ENCODE measurements at regions of chr10 and their contacts with region 1.

Region 1: GRCh38 chr10:95601116-95601719 is 40.0 kb upstream of the SORBS1 start:
- DNase-seq: peak in 8 of 9 donors; percentile 2 to 44 (median 28)
- ATAC-seq: peak; percentile 58
- H3K4me3 ChIP-seq: no peak overlapping the region
- H3K4me3 Mint-ChIP-seq: no peak overlapping the region
- H3K27ac ChIP-seq: no peak overlapping the region
- H3K27ac Mint-ChIP-seq: no peak overlapping the region
- H3K4me1 ChIP-seq: no peaks in the 10 kb centered on the region
- H3K4me1 Mint-ChIP-seq: peaks cover 0 to 4% (median 0%) of the 10 kb centered on the region in 7 donors
- H3K27me3 ChIP-seq: no peaks in the 10 kb centered on the region
- H3K27me3 Mint-ChIP-seq: peaks cover 0 to 8% (median 5%) of the 10 kb centered on the region in 5 donors

Region 2: GRCh38 chr10:95133016-95133752 is 468.0 kb before region 1 on chr10:
- CTCF ChIA-PET with region 1: no interaction called
- POLR2A ChIA-PET with region 1: no interaction called
- intact Hi-C with region 1: loop called in 1 of 2 experiments (anchors 5 kb)
- DNase-seq: peak in 8 of 9 donors; percentile 22 to 74 (median 48)
- ATAC-seq: peak; percentile 67
- H3K4me3 ChIP-seq: no peak overlapping the region
- H3K4me3 Mint-ChIP-seq: no peak overlapping the region
- H3K27ac ChIP-seq: no peak overlapping the region
- H3K27ac Mint-ChIP-seq: no peak overlapping the region
- H3K4me1 ChIP-seq: no peaks in the 10 kb centered on the region
- H3K4me1 Mint-ChIP-seq: no peaks in the 10 kb centered on the region
- H3K27me3 ChIP-seq: no peaks in the 10 kb centered on the region
- H3K27me3 Mint-ChIP-seq: peaks cover 0 to 9% (median 0%) of the 10 kb centered on the region in 5 donors

Region 3: DNA sequence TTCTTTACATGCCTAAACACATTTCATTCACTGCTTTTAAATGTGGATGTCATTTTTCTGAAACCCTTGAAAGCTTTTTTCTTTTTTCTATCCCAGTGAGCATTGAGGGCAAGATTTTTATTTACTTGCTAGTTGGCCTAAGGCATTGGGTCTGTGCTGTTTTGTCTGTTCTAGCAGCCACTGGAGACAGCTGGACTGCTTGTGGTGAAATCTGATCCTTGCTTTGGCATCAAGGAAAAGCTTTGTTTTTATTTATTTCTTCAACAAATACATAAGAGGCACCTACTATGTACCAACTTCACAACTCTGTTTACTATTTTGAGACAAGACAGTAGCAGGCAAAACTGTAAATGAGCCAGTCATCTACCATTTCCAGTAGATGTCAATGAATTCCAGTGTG is 282.0 kb before region 1 on chr10:
- CTCF ChIA-PET with region 1: no interaction called
- POLR2A ChIA-PET with region 1: no interaction called
- intact Hi-C with region 1: no loop called
- DNase-seq: no peak
- ATAC-seq: no peak
- H3K4me3 ChIP-seq: no peak overlapping the region
- H3K4me3 Mint-ChIP-seq: no peak overlapping the region
- H3K27ac ChIP-seq: no peak overlapping the region
- H3K27ac Mint-ChIP-seq: no peak overlapping the region
- H3K4me1 ChIP-seq: no peaks in the 10 kb centered on the region
- H3K4me1 Mint-ChIP-seq: no peaks in the 10 kb centered on the region
- H3K27me3 ChIP-seq: no peaks in the 10 kb centered on the region
- H3K27me3 Mint-ChIP-seq: peaks cover 0 to 28% (median 0%) of the 10 kb centered on the region in 5 donors

Region 4: DNA sequence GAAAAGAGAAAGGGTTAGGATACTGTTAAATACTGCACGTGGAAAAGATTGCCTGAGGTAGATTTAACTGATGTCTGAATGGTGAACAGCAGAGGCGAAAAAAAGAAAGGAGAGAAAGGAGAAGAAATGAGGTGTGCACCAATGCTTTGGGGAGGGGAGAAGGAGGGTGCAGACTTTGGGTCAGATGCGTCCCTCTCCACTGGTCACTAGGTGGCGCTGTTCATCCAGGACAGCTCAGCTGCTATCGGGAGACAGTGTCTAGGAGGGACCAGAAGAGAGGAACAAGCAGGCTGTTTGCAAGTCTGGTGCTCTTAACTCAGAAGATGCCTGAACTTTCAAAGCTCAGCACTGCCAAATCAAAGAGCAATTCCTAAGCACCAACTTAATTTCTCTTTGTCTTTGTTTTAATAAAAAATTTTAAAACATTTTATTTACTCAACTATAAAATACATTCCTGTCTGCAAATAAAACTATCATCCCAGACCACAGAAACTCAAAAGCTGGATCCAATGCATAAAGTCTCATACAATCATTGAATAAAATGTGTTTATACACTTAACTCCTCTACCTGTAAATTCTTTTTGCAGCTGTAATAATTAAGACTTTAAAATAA is 226.5 kb before region 1 on chr10:
- CTCF ChIA-PET with region 1: no interaction called
- POLR2A ChIA-PET with region 1: no interaction called
- intact Hi-C with region 1: loop called (anchors 1 kb)
- DNase-seq: peak in 4 of 9 donors; percentile 8 to 70 (median 15)
- ATAC-seq: peak; percentile 89
- H3K4me3 ChIP-seq: no peak overlapping the region
- H3K4me3 Mint-ChIP-seq: no peak overlapping the region
- H3K27ac ChIP-seq: no peak overlapping the region
- H3K27ac Mint-ChIP-seq: no peak overlapping the region
- H3K4me1 ChIP-seq: no peaks in the 10 kb centered on the region
- H3K4me1 Mint-ChIP-seq: peaks cover 0 to 6% (median 4%) of the 10 kb centered on the region in 7 donors
- H3K27me3 ChIP-seq: no peaks in the 10 kb centered on the region
- H3K27me3 Mint-ChIP-seq: peaks cover 8 to 56% (median 17%) of the 10 kb centered on the region in 5 donors

Region 5: GRCh38 chr10:95430231-95430951 is 170.8 kb before region 1 on chr10:
- CTCF ChIA-PET with region 1: interaction called, 31 read pairs
- POLR2A ChIA-PET with region 1: no interaction called
- intact Hi-C with region 1: loop called in 1 of 2 experiments (anchors 1 kb)
- DNase-seq: peak in 8 of 9 donors; percentile 14 to 52 (median 34)
- ATAC-seq: peak; percentile 89
- H3K4me3 ChIP-seq: no peak overlapping the region
- H3K4me3 Mint-ChIP-seq: no peak overlapping the region
- H3K27ac ChIP-seq: no peak overlapping the region
- H3K27ac Mint-ChIP-seq: no peak overlapping the region
- H3K4me1 ChIP-seq: no peaks in the 10 kb centered on the region
- H3K4me1 Mint-ChIP-seq: peaks cover 0 to 2% (median 0%) of the 10 kb centered on the region in 7 donors
- H3K27me3 ChIP-seq: no peaks in the 10 kb centered on the region
- H3K27me3 Mint-ChIP-seq: peaks cover 0 to 3% (median 0%) of the 10 kb centered on the region in 5 donors

Region 6: DNA sequence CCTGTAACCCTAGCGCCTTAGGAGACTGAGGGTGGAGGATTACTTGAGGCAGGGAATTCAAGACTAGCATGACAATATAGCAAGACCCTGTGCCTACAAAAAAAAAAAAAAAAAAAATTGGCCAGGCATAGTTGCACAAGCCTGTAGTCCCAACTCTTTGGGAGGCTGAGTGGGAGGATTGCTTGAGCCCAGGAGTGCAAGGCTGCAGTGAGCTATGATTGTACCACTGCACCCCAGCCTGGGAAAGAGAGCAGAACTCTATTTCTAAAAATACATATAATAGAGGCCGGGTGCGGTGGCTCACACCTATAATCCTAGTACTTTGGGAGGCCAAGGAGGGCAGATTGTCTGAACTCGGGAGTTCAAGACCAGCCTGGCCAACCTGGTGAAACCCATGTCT is 29.8 kb before region 1 on chr10:
- CTCF ChIA-PET with region 1: no interaction called
- POLR2A ChIA-PET with region 1: no interaction called
- intact Hi-C with region 1: no loop called
- DNase-seq: no peak
- ATAC-seq: no peak
- H3K4me3 ChIP-seq: no peak overlapping the region
- H3K4me3 Mint-ChIP-seq: no peak overlapping the region
- H3K27ac ChIP-seq: no peak overlapping the region
- H3K27ac Mint-ChIP-seq: no peak overlapping the region
- H3K4me1 ChIP-seq: no peaks in the 10 kb centered on the region
- H3K4me1 Mint-ChIP-seq: peaks cover 0 to 2% (median 0%) of the 10 kb centered on the region in 7 donors
- H3K27me3 ChIP-seq: no peaks in the 10 kb centered on the region
- H3K27me3 Mint-ChIP-seq: peaks cover 8 to 24% (median 15%) of the 10 kb centered on the region in 5 donors

Region 7: GRCh38 chr10:95656291-95657164 is 55.3 kb after region 1 on chr10 and contains the start of gene ALDH18A1:
- CTCF ChIA-PET with region 1: no interaction called
- POLR2A ChIA-PET with region 1: no interaction called
- intact Hi-C with region 1: no loop called
- DNase-seq: peak; percentile 78 to 95 (median 88)
- ATAC-seq: peak; percentile 95
- H3K4me3 ChIP-seq: peak within 1 kb of the TSS; percentile 78
- H3K4me3 Mint-ChIP-seq: peak within 1 kb of the TSS; percentile 98 to 100 (median 99)
- H3K27ac ChIP-seq: peak within 1 kb of the TSS; percentile 72
- H3K27ac Mint-ChIP-seq: peak within 1 kb of the TSS; percentile 82 to 97 (median 93)
- H3K4me1 ChIP-seq: peaks cover 7 to 13% of the 10 kb centered on the region in 2 donors
- H3K4me1 Mint-ChIP-seq: peaks cover 7 to 40% (median 27%) of the 10 kb centered on the region in 7 donors
- H3K27me3 ChIP-seq: no peaks in the 10 kb centered on the region
- H3K27me3 Mint-ChIP-seq: peaks cover 0 to 3% (median 0%) of the 10 kb centered on the region in 5 donors
- total RNA-seq, gene ALDH18A1: 15.0 to 73.8 (median 26.0) TPM